Left ventricle myocardium inferior (tissue), 1 donor: ENCODE measurements at regions of chr6 and their contacts with region 1.

Region 1: GRCh38 chr6:44074439-44075136 is 52.7 kb downstream of the MRPL14 start:
- DNase-seq: peak; percentile 84
- H3K4me3 ChIP-seq: peak overlapping the region; percentile 67
- H3K27ac ChIP-seq: peak overlapping the region; percentile 89
- H3K4me1 ChIP-seq: peaks cover 60% of the 10 kb centered on the region
- H3K27me3 ChIP-seq: no peaks in the 10 kb centered on the region
- CTCF ChIP-seq: peak; percentile 93

Region 2: GRCh38 chr6:43608310-43608763 is 466.3 kb before region 1 on chr6:
- intact Hi-C with region 1: loop called (anchors 10 kb)
- DNase-seq: peak; percentile 36
- H3K4me3 ChIP-seq: no peak overlapping the region
- H3K27ac ChIP-seq: no peak overlapping the region
- H3K4me1 ChIP-seq: peaks cover 7% of the 10 kb centered on the region
- H3K27me3 ChIP-seq: no peaks in the 10 kb centered on the region
- CTCF ChIP-seq: peak; percentile 83

Region 3: DNA sequence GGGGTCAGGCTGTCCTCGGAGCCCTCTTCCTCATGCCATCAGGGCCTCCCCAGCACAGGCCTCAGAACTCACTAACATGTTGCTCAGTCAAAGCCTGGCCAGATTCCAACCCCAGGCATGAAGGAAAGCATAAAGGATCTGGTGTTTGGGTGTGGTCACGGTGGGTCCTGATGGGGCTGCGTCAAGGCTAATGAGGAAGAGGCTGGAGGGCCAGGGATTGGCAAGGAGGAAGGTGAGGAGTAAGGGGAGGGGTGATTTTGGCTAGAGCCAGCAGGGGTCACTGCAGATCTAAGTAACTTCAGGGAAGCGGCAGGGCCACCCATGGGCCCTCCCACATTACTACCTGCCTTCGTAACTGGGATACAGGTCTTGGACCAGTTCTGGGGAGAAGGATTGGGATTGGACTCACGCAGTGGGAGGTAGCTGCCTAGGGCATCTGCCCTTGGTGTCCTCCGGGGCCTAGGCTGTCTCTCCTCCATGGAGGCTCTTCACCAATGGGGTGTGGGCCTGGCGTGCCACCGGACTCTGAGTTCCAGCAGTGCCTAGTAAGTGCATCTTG is 350.8 kb before region 1 on chr6:
- intact Hi-C with region 1: loop called (anchors 2 kb)
- DNase-seq: peak; percentile 69
- H3K4me3 ChIP-seq: no peak overlapping the region
- H3K27ac ChIP-seq: no peak overlapping the region
- H3K4me1 ChIP-seq: peaks cover 9% of the 10 kb centered on the region
- H3K27me3 ChIP-seq: no peaks in the 10 kb centered on the region
- CTCF ChIP-seq: peak; percentile 78

Region 4: DNA sequence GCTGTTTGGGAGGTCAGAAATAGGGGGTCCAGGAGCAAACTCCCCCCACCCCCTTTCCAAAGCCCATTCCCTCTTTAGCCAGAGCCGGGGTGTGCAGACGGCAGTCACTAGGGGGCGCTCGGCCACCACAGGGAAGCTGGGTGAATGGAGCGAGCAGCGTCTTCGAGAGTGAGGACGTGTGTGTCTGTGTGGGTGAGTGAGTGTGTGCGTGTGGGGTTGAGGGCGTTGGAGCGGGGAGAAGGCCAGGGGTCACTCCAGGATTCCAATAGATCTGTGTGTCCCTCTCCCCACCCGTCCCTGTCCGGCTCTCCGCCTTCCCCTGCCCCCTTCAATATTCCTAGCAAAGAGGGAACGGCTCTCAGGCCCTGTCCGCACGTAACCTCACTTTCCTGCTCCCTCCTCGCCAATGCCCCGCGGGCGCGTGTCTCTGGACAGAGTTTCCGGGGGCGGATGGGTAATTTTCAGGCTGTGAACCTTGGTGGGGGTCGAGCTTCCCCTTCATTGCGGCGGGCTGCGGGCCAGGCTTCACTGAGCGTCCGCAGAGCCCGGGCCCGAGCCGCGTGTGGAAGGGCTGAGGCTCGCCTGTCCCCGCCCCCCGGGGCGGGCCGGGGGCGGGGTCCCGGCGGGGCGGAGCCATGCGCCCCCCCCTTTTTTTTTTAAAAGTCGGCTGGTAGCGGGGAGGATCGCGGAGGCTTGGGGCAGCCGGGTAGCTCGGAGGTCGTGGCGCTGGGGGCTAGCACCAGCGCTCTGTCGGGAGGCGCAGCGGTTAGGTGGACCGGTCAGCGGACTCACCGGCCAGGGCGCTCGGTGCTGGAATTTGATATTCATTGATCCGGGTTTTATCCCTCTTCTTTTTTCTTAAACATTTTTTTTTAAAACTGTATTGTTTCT is 304.8 kb before region 1 on chr6 and contains the start of gene VEGFA:
- intact Hi-C with region 1: loop called (anchors 5 kb)
- DNase-seq: peak; percentile 91
- H3K4me3 ChIP-seq: peak within 1 kb of the TSS; percentile 95
- H3K27ac ChIP-seq: peak within 1 kb of the TSS; percentile 98
- H3K4me1 ChIP-seq: peaks cover 67% of the 10 kb centered on the region
- H3K27me3 ChIP-seq: no peaks in the 10 kb centered on the region
- CTCF ChIP-seq: peak; percentile 98
- total RNA-seq, gene VEGFA: 359 TPM

Region 5: GRCh38 chr6:43951063-43951755 is 123.4 kb before region 1 on chr6:
- intact Hi-C with region 1: loop called (anchors 10 kb)
- DNase-seq: peak; percentile 62
- H3K4me3 ChIP-seq: no peak overlapping the region
- H3K27ac ChIP-seq: peak overlapping the region; percentile 92
- H3K4me1 ChIP-seq: peaks cover 28% of the 10 kb centered on the region
- H3K27me3 ChIP-seq: no peaks in the 10 kb centered on the region
- CTCF ChIP-seq: peak; percentile 68

Region 6: DNA sequence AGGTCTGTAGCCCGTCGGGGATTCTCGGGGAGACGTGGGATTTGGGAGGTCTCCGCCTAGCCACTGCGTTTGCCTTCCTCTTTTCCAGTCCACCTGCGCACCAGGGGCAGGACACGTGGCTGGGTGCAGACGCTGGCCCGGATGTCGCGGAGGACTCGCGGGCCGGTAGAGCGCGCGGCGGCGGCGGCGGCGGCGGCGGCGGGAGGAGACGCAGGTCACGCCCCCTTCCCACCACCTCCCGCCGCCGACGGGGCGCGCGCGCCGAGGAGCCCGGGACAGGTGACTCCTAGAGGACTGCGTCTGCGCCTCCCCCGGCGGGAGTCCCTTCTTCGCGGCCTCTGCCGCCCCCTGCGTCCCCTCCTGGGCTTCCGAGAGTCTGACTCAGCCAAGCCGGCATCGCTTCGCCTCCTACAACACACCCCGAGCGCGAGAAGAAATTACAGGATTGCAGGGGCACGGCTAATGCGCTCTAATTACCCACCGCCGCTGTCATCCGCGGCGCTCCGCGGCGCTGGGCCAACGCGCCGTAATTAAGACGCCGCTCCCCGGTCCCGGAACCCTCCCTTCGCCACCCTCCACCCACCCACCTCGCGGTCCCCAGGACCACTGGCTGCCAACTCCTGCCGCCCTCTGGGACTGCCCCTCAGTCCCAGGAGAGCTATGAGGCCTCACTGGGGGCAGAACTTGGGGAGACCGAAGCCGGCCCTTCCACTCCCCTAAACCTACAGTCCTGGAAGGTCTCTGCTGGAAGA is 71.8 kb before region 1 on chr6:
- intact Hi-C with region 1: no loop called
- DNase-seq: peak; percentile 45
- H3K4me3 ChIP-seq: peak overlapping the region; percentile 57
- H3K27ac ChIP-seq: peak overlapping the region; percentile 92
- H3K4me1 ChIP-seq: peaks cover 51% of the 10 kb centered on the region
- H3K27me3 ChIP-seq: peaks cover 58% of the 10 kb centered on the region
- CTCF ChIP-seq: no peak

Region 7: DNA sequence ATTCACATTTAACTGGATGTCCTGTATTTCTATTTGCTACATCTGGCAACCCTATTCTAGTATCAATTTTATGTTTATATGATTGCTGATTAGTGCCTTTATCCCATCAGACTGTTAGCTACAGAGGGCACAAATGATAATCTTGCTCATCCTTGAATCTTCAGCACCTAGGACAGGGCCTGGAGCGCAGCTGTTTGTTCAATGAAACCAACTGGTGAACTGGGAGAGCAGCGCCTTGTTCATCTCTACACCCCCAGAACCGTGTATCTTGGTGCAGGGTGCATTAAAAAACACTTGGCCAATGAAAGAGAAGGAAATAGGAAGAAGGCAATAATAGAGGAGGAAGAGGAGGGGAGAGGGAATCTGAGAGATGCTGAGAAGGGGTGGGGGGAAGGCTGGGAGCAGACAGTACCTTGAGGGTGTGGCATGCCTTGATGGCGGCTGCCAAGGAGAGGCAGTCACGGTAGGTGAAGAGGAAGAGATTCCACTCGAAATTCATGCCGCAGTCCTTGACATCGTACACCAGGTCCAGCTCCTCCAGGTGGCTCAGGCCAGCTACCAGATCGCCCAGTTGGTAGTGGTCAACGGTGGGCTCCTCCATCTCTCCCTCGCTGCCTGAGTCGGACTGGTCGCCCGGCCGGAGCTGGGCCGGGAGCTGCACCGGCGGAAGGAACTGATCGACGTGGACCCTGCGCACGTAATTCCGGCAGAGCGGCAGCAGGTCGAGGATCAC is 211.1 kb after region 1 on chr6:
- intact Hi-C with region 1: no loop called
- DNase-seq: no peak
- H3K4me3 ChIP-seq: no peak overlapping the region
- H3K27ac ChIP-seq: no peak overlapping the region
- H3K4me1 ChIP-seq: no peaks in the 10 kb centered on the region
- H3K27me3 ChIP-seq: peaks cover 100% of the 10 kb centered on the region
- CTCF ChIP-seq: no peak